CD14-positive monocyte (primary cell): ENCODE measurements at regions of chr6 and their contacts with region 1.

Region 1: DNA sequence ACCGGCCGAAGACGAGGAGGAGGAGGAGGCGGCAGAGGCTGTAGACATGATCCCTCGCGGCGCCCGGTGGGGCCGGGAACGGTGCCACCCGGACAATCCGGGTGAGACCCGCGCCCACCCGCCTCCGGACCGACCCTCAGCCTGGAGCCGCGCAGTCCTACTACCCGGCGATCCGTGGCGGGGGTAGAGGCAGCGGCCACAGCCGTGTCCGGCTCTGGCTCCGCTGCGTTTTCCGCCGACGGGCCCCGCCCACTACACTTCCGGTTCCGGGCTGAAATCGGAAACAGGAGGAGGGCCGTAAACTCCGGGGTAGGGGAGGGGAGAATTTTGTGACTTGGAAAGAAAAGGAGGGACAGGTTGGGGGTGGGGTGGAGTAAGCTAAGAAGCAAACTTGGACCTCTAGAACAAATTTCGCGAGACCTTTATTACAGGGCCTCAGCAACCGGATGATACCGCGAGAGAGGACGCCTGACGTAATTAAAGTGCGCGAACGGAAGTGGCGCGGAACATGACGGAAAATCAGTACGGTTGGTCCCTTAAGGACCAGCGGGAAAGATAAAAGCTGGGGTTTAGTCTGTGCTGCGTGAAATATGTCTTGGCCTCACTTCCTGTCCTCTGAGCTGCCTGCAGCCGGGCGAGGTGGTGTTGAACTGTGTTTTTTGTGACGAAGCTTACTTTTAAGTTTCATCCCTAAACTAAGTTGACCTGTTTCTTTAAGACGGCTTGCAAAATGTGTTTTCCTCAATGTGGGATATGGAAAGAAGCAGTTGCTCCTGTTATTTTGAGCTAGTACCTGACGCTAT is at the start of gene MAP3K7:
- DNase-seq: peak; percentile 96 to 98 (median 96)
- H3K4me3 ChIP-seq: peak within 1 kb of the TSS; percentile 93 to 97 (median 95)
- H3K4me3 Mint-ChIP-seq: peak within 1 kb of the TSS; percentile 89 to 97
- H3K27ac ChIP-seq: peak within 1 kb of the TSS; percentile 91 to 97
- H3K27ac Mint-ChIP-seq: peak within 1 kb of the TSS; percentile 98 to 100 (median 99)
- H3K4me1 ChIP-seq: peaks cover 14 to 29% of the 10 kb centered on the region in 2 donors
- H3K4me1 Mint-ChIP-seq: peaks cover 30% of the 10 kb centered on the region
- H3K27me3 ChIP-seq: peaks cover 7 to 15% of the 10 kb centered on the region in 2 donors
- H3K27me3 Mint-ChIP-seq: peaks cover 7 to 23% (median 7%) of the 10 kb centered on the region in 3 donors
- CTCF ChIP-seq: no peak
- polyA plus RNA-seq, gene MAP3K7: 12.4 to 20.0 (median 15.3) TPM

Region 2: GRCh38 chr6:89829591-89830385 is 757.2 kb before region 1 on chr6 and contains the start of gene CASP8AP2:
- intact Hi-C with region 1: loop called in 1 of 2 experiments (anchors 10 kb)
- DNase-seq: peak; percentile 95 to 98 (median 97)
- H3K4me3 ChIP-seq: peak within 1 kb of the TSS; percentile 90 to 100 (median 94)
- H3K4me3 Mint-ChIP-seq: peak within 1 kb of the TSS; percentile 96 to 98
- H3K27ac ChIP-seq: peak within 1 kb of the TSS; percentile 76 to 94
- H3K27ac Mint-ChIP-seq: peak within 1 kb of the TSS; percentile 89 to 97 (median 96)
- H3K4me1 ChIP-seq: peaks cover 13 to 18% of the 10 kb centered on the region in 2 donors
- H3K4me1 Mint-ChIP-seq: peaks cover 10% of the 10 kb centered on the region
- H3K27me3 ChIP-seq: no peaks in the 10 kb centered on the region
- H3K27me3 Mint-ChIP-seq: no peaks in the 10 kb centered on the region
- CTCF ChIP-seq: no peak
- polyA plus RNA-seq, gene CASP8AP2: 3.5 to 10.5 (median 7.4) TPM

Region 3: DNA sequence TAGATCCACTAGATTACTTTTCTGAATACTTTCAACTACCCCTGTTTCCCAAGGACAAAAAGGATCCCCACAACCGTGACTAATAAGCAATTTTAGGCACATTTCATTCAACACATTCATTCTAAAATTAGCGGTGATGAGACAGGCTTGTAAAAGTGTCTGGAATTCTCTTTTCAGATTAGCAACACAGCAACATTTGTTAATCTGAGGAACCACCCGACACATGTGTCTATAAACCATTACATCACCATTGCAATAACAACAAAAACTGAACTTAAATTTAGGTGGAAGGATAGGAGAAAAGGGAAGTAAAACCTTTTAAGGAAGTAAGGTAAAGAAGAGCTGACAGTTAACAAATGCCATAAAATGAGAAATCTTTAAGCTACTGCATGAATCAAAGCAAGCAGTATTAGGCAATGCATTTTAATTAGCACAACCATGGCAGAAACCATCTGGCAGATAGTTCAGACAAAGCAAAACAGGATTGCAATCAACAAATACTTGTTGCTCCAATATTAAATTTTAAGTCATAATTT is 49.2 kb before region 1 on chr6:
- intact Hi-C with region 1: loop called in 1 of 2 experiments (anchors 2 kb)
- DNase-seq: peak; percentile 86 to 95 (median 93)
- H3K4me3 ChIP-seq: no peak overlapping the region
- H3K4me3 Mint-ChIP-seq: peak overlapping the region in 1 of 2 donors; percentile 49
- H3K27ac ChIP-seq: peak overlapping the region in 1 of 2 donors; percentile 81
- H3K27ac Mint-ChIP-seq: peak overlapping the region; percentile 86 to 95 (median 91)
- H3K4me1 ChIP-seq: peaks cover 12 to 22% of the 10 kb centered on the region in 2 donors
- H3K4me1 Mint-ChIP-seq: peaks cover 17% of the 10 kb centered on the region
- H3K27me3 ChIP-seq: no peaks in the 10 kb centered on the region
- H3K27me3 Mint-ChIP-seq: no peaks in the 10 kb centered on the region
- CTCF ChIP-seq: no peak